Natural killer cell (primary cell): ENCODE measurements at regions of chr10 and their contacts with region 1.

Region 1: DNA sequence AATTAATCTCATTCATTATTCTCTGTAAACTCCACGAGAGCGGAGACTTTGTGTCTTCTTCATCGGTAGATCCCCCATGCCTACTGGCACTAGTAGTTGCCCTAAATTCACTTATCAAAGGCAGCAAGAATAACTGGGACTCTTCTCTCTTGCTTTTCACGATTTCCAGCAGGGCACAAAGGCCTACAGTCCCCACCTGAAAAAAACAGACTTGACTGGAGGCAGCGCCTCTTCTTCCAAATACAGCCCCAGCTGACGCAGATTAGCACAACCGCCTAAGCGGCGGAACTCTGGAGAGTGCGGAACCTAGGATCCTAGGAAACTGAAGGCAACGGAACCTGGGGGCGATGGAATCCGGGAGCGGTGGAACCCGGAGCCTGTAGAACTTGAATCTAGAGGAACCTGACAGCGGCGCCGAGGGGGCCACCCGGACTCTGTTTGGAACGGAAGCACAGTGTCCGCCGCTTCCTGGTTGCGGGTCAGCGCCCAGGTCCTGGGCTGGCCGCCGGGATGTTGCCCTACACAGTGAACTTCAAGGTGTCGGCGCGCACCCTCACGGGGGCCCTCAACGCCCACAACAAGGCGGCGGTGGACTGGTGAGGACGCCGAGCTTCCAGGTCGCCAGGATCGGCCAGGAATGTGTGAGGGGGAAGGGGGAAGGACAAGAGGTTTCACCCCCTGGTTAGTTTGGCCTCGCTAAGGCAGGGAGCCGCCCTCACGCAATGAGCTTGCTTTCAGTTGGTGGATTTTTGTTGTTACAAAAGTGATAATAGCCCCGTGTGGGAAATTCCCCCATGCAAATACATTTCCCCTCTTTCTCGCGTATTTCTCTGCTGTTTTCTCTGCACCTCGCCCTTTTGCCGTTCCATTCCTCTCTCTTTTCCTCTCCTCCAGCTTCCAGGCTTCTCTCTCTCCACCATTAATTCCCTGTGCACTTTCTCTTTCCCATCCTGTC is at the start of gene WDR11:
- DNase-seq: peak; percentile 70 to 82
- ATAC-seq: peak; percentile 90 to 95 (median 92)
- H3K4me3 ChIP-seq: peak within 1 kb of the TSS; percentile 74
- H3K4me3 Mint-ChIP-seq: peak within 1 kb of the TSS; percentile 95
- H3K27ac ChIP-seq: peak within 1 kb of the TSS; percentile 88
- H3K27ac Mint-ChIP-seq: peak within 1 kb of the TSS; percentile 91 to 96
- H3K4me1 ChIP-seq: peaks cover 13% of the 10 kb centered on the region
- H3K4me1 Mint-ChIP-seq: peaks cover 29 to 55% of the 10 kb centered on the region in 2 donors
- H3K27me3 ChIP-seq: no peaks in the 10 kb centered on the region
- H3K27me3 Mint-ChIP-seq: no peaks in the 10 kb centered on the region
- CTCF ChIP-seq: no peak
- total RNA-seq, gene WDR11: 70.8 to 88.3 (median 77.8) TPM

Region 2: DNA sequence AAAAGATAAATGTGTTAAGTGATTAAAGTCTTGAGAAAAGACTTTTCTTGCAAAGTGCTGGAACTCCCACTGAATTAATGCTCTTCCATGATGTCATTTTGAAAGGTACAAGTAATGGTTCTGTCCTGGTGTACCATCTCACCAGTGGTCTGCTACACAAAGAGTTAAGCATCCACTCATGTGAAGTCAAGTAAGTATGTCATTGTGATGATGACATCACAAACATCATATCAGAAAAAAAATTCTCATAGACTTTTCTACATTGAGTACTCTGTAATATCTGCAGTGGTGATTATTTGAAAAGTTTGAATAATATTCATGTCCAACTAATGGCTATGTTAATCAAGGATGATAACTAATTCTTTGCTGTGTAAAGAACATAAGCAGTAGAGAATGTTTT is 22.5 kb after region 1 on chr10:
- intact Hi-C with region 1: no loop called
- DNase-seq: no peak
- ATAC-seq: no peak
- H3K4me3 ChIP-seq: no peak overlapping the region
- H3K4me3 Mint-ChIP-seq: no peak overlapping the region
- H3K27ac ChIP-seq: no peak overlapping the region
- H3K27ac Mint-ChIP-seq: no peak overlapping the region
- H3K4me1 ChIP-seq: no peaks in the 10 kb centered on the region
- H3K4me1 Mint-ChIP-seq: no peaks in the 10 kb centered on the region
- H3K27me3 ChIP-seq: no peaks in the 10 kb centered on the region
- H3K27me3 Mint-ChIP-seq: no peaks in the 10 kb centered on the region
- CTCF ChIP-seq: no peak

Region 3: GRCh38 chr10:121927841-121928527 is 1076.8 kb after region 1 on chr10 and contains the start of gene ATE1:
- intact Hi-C with region 1: loop called (anchors 5 kb)
- DNase-seq: peak; percentile 80 to 91
- ATAC-seq: peak; percentile 91 to 97 (median 96)
- H3K4me3 ChIP-seq: peak within 1 kb of the TSS; percentile 79
- H3K4me3 Mint-ChIP-seq: peak within 1 kb of the TSS; percentile 95
- H3K27ac ChIP-seq: peak within 1 kb of the TSS; percentile 98
- H3K27ac Mint-ChIP-seq: peak within 1 kb of the TSS; percentile 87 to 92
- H3K4me1 ChIP-seq: peaks cover 6% of the 10 kb centered on the region
- H3K4me1 Mint-ChIP-seq: peaks cover 28 to 33% of the 10 kb centered on the region in 2 donors
- H3K27me3 ChIP-seq: no peaks in the 10 kb centered on the region
- H3K27me3 Mint-ChIP-seq: no peaks in the 10 kb centered on the region
- CTCF ChIP-seq: no peak
- total RNA-seq, gene ATE1: 30.4 to 40.6 (median 30.5) TPM